ENCODE measurements at regions of chr19 and their contacts with region 1.

Region 1: GRCh38 chr19:57850553-57851017 is 926 bp downstream of the ZNF587 start:
- H3K4me3 Mint-ChIP-seq: peak overlapping the region; percentile 87
- H3K27ac Mint-ChIP-seq: peak overlapping the region; percentile 98
- H3K4me1 Mint-ChIP-seq: peaks cover 20% of the 10 kb centered on the region
- H3K27me3 Mint-ChIP-seq: no peaks in the 10 kb centered on the region

Region 2: DNA sequence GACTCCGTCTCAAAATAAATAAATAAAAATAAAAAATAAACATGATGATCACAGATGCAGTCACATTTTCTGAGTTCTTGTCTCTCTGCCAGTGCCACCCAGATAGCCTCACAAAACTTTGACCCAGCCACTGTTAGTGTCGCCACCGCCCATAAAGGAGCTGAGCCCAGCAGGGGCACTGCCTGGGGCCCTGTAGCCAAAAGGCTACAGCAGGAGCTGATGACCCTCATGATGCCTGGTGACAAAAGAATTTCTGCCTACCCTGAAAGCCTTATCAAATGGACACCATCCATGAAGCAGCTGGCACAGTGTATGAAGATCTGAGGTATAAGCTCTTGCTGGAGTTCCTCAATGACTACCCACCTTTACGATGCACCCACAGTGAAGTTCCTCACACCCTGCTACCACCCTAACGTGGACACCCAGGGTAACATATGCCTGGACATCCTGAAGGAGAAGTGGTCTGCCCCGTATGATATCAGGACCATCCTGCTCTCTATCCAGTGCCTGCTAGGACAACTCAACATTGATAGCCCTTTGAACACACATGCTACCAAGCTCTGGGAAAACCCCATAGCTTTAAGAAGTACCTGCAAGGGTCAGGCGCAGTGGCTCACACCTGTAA is 17.4 kb after region 1 on chr19:
- intact Hi-C with region 1: no loop called
- H3K4me3 Mint-ChIP-seq: no peak overlapping the region
- H3K27ac Mint-ChIP-seq: no peak overlapping the region
- H3K4me1 Mint-ChIP-seq: no peaks in the 10 kb centered on the region
- H3K27me3 Mint-ChIP-seq: no peaks in the 10 kb centered on the region

Region 3: GRCh38 chr19:57888560-57889231 is 38.1 kb after region 1 on chr19 and contains the start of gene ZNF814:
- intact Hi-C with region 1: loop called (anchors 5 kb)
- H3K4me3 Mint-ChIP-seq: peak within 1 kb of the TSS; percentile 85
- H3K27ac Mint-ChIP-seq: peak within 1 kb of the TSS; percentile 86
- H3K4me1 Mint-ChIP-seq: peaks cover 16% of the 10 kb centered on the region
- H3K27me3 Mint-ChIP-seq: peaks cover 3% of the 10 kb centered on the region

Region 4: GRCh38 chr19:57900311-57900710 is 49.7 kb after region 1 on chr19:
- intact Hi-C with region 1: no loop called
- H3K4me3 Mint-ChIP-seq: no peak overlapping the region
- H3K27ac Mint-ChIP-seq: no peak overlapping the region
- H3K4me1 Mint-ChIP-seq: no peaks in the 10 kb centered on the region
- H3K27me3 Mint-ChIP-seq: no peaks in the 10 kb centered on the region